Head of caudate nucleus (tissue), 42 donors: ENCODE measurements at regions of chr12 and their contacts with region 1.

Region 1: GRCh38 chr12:69157023-69157655 is 82.2 kb upstream of the CPSF6 start:
- DNase-seq: peak; percentile 71 to 94 (median 88)

Region 2: DNA sequence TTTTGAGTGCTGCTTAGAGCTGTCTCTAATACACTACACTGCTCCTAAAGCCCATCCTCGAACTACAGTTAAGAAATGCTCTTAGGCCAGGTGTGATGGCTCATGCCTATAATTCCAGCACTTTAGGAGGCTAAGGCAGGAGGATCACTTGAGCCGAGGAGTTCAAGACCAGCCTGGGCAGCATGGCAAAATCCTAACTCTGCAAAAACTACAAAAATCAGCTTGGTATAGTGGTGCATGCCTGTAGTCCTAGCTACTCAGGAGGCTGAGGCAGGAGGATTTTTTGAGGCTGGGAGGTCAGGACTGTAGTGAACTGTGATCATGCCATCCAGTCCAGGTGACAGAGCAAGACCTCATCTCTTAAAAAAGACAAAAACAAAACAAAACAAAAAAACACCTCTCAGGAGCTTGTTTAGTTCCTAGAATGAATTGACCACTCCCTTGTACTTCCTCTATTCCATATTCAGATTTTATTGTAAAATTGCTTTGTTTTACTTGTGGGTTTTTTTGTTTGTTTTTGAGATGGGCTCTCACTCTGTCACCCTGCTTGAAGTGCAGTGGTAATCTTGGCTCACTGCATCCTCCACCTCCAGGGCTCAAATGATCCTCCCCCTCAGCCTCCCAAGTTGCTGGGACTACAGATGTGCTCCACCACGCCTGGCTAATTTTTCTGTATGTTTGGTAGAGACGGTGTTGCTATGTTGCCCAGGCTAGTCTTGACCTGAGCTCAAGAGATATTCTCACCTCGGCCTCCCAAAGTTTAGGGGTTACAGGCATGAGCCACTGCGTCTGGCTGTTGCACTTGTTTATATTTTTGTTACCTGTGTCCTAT is 335.6 kb before region 1 on chr12:
- intact Hi-C with region 1: loop called (anchors 10 kb)
- DNase-seq: no peak

Region 3: GRCh38 chr12:69254046-69254445 is 96.9 kb after region 1 on chr12:
- intact Hi-C with region 1: loop called (anchors 5 kb)
- DNase-seq: peak in 1 of 42 donors; percentile 12